Activated CD4-positive, alpha-beta memory T cell treated with anti-CD3 and anti-CD28 coated beads, Interleukin-2, amount 10 ng/mL, durations not matched to agents 7 days and 5 days (primary cell): ENCODE measurements at regions of chr16 and their contacts with region 1.

Region 1: GRCh38 chr16:1759511-1759910 is 11.8 kb downstream of the NME3 start:
- DNase-seq: no peak
- H3K4me3 Mint-ChIP-seq: no peak overlapping the region
- H3K27ac Mint-ChIP-seq: no peak overlapping the region
- H3K4me1 Mint-ChIP-seq: peaks cover 24% of the 10 kb centered on the region
- H3K27me3 Mint-ChIP-seq: no peaks in the 10 kb centered on the region

Region 2: DNA sequence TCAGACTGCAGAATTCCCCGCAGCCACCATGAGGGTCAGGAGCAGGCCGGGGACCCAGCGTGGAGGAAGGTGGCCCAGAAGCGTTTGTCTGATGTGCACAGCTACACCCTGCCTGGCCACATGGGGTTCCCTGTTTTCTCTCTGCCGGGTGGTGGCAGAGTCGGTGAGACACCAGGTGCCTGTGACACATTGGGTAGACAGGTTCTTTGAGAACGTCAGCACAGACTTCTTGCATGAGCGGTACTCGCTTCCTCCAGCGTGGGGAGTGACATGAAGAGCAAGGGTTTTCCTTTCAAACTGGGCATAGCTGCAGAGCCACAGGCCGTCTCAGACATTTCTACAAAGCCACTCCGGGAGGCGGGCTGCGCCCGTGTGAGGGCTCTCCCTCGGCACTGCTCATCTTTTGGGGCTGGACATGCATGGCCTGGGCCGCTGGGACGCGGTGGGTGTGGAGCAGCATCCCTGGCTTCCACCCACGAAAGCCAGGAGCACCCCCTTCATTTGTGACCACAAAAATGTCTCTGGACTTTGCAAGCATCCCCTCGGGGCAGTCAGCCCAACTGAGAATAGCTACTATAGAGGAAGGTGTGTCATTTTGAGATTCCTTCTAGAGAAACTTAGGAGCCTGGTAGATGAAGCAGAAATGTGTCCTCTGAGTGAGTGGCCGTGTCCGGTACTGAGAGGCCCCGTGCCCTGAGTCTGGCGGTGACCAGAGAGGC is 14.2 kb before region 1 on chr16:
- CTCF ChIA-PET with region 1: no interaction called
- POLR2A ChIA-PET with region 1: no interaction called
- DNase-seq: no peak
- H3K4me3 Mint-ChIP-seq: no peak overlapping the region
- H3K27ac Mint-ChIP-seq: no peak overlapping the region
- H3K4me1 Mint-ChIP-seq: no peaks in the 10 kb centered on the region
- H3K27me3 Mint-ChIP-seq: no peaks in the 10 kb centered on the region

Region 3: GRCh38 chr16:1772736-1773584 is 13.4 kb after region 1 on chr16 and contains the starts of genes EME2 and MRPS34:
- CTCF ChIA-PET with region 1: no interaction called
- POLR2A ChIA-PET with region 1: interaction called, 10 read pairs
- DNase-seq: peak; percentile 84
- H3K4me3 Mint-ChIP-seq: peak within 1 kb of the TSS; percentile 98
- H3K27ac Mint-ChIP-seq: peak within 1 kb of the TSS; percentile 97
- H3K4me1 Mint-ChIP-seq: peaks cover 14% of the 10 kb centered on the region
- H3K27me3 Mint-ChIP-seq: no peaks in the 10 kb centered on the region
- total RNA-seq, gene EME2: 23.5 to 24.7 TPM
- total RNA-seq, gene MRPS34: 94.9 to 98.3 TPM